ENCODE measurements at regions of chr1 and their contacts with region 1.

Region 1: DNA sequence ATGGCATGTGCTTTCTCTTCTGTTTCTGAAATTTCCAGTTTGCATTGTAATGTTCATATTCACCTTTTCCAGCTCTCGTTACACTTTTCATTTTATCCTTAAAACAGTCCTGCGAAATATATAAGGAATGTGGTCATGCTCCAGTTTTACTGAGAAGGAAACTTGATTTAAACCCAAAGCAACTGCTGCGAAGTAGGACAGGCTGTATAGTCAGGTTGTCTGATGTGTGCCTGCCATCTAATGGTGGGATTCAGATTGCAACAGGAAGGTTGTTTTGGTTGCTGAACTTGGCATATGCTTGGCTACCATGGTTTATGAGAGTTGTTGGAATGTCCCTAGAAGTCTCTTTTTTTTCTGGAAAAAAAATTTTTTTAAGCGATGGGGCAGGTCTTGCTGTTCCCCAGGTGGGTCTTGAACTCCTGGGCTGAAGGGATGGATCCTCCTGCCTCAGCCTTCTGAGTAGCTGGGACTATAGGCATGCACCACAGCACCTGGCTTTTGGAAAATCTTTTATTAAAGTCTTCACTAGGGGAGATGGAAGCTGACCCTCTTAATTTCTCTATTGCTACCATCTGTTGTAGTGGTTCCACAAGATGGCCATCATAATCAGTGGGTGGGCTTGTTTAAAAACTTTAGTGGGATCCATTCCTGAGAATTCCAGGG is 86.9 kb downstream of the UCK2 start:
- DNase-seq: no peak
- H3K4me3 ChIP-seq: no peak overlapping the region
- CTCF ChIP-seq: peak; percentile 80

Region 2: GRCh38 chr1:165392634-165393571 is 521.4 kb before region 1 on chr1:
- CTCF ChIA-PET with region 1: interaction called, 12 read pairs
- POLR2A ChIA-PET with region 1: no interaction called
- DNase-seq: peak; percentile 62
- H3K4me3 ChIP-seq: no peak overlapping the region
- CTCF ChIP-seq: peak; percentile 90

Region 3: DNA sequence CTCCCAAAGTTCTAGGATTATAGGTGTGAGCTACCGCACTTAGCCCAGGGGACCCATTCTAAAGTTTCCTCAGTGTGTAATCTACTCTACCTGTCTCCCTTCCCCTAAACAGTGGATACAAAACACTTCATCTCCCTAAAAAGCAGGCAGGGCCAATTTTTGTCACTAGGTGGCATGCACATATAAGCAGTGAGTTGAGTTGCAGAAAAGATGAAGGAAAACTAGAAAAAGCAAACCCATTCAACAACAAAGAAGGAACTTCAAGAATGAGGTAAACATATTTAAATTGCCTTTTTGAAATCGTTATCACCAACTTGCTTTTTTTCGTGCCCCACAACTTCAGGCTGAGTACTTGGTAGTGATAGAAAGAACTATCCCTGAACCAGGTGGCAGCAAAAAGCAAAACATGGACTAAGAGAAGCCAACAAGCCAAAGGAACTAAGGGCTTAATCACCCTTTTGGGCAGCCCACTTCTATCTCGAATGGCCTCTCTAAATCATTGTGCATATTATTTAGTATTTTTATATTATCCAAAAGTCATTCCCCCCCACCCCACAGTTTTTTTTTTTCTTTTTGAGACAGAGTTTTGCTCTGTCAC is 196.2 kb before region 1 on chr1:
- CTCF ChIA-PET with region 1: interaction called, 71 read pairs
- POLR2A ChIA-PET with region 1: no interaction called
- DNase-seq: peak; percentile 29
- H3K4me3 ChIP-seq: no peak overlapping the region
- CTCF ChIP-seq: peak; percentile 77

Region 4: GRCh38 chr1:165742194-165742593 is 172.1 kb before region 1 on chr1:
- CTCF ChIA-PET with region 1: interaction called, 27 read pairs
- POLR2A ChIA-PET with region 1: no interaction called
- DNase-seq: no peak
- H3K4me3 ChIP-seq: no peak overlapping the region
- CTCF ChIP-seq: no peak

Region 5: GRCh38 chr1:165828103-165828668 is 86.1 kb before region 1 on chr1:
- CTCF ChIA-PET with region 1: interaction called, 22 read pairs
- POLR2A ChIA-PET with region 1: no interaction called
- DNase-seq: no peak
- H3K4me3 ChIP-seq: peak overlapping the region; percentile 83
- CTCF ChIP-seq: no peak

Region 6: DNA sequence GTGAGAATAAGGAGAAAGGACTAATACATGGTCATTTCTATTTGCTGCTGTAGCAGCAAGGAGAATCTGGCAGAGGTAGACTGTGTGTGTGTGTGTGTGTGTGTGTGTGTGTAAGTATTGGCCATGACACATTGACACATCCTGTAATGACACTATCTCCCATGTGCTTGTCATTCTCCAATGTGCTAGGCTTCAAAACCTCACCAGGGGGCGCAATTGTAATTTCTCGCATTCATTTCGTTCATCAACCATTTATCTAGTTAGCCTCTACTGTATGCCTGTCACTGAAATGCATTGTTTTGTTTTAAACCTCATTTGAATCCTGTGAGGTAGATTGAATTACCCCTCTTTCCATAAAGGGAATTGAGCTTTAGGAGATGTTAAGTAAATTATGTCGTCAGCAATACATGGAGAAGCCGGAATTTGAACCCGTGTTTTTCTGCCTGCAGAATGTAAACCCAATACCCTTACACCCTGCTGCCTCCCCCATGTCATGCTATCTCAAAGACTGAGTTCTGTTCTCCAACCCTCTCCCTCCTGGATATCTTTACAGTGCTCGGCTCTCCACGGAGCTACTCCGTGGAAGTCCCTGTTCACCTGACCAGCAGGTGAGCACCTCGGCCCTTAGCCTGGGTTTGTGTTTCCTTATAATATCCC is 13.9 kb after region 1 on chr1:
- CTCF ChIA-PET with region 1: interaction called, 39 read pairs
- POLR2A ChIA-PET with region 1: interaction called, 3 read pairs
- DNase-seq: no peak
- H3K4me3 ChIP-seq: no peak overlapping the region
- CTCF ChIP-seq: peak; percentile 72

Region 7: DNA sequence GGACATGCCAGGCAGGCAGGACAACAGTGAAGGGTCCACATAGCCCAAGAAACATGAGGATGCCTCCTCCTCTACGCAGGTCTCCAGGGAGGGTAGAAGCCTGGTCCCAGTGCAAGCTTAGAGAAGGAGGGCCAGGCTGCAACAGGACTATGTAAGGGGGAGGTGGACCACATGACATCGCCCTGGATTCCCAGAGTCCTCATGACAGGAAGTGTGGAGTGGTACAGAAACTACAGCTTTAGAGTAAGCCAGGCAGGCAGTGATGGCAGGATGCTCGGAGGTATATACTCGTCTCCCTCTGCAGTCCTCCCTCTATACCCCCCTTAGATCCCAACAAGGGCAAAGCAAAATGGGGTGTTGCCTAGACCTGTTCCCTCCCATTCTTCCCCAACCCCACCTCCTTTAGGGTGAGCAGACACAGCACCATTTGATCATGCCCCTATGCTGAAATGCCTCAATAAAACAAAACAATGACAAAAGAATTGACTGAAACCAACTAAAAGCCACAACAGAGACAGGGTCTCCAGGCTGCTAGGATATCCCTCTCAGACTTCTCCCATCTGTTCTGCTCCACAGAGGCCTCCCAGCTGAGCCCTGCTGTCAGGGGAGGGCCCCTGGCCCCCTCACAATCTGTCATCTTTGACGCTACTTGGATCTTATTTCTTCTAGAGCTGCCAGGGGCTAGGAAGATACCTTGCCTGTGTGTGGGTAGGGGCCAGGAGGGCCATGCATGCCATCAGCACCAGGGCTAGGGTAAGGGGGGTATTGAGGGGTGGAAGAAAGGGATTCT is 239.5 kb after region 1 on chr1:
- CTCF ChIA-PET with region 1: no interaction called
- POLR2A ChIA-PET with region 1: no interaction called
- DNase-seq: no peak
- H3K4me3 ChIP-seq: no peak overlapping the region
- CTCF ChIP-seq: no peak